CD8-positive, alpha-beta T cell (primary cell): ENCODE measurements at regions of chr10 and their contacts with region 1.

Region 1: DNA sequence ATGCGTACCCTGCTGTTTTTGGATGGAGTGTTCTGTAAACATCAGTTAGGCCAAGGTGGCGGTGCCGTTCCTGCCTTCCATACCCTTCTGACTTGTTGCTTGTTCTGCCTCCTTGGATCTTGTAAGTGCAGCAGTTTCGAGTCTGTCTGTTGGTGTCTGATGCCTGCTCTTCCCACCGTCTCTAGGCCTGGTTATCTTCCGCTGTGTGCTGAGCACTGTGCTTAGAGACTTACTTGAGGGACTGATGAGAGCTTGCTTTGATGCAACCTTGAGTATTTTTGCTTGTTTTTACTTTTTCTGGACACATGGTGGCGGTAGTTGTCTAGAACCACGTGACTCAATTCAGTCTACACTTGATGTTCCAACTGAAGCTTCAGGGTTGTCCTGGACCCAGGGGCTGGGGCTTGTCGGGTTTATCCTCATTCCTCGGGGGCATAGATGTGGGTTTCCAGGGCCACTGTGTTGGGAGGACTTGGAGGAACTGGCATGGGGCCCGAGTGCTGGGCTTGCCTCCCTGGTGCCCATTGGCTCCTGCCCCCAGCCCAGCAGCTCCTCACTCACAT is 14.4 kb upstream of the SPRN start:
- DNase-seq: peak in 2 of 9 experiments; percentile 43 to 46
- ATAC-seq: no peak
- H3K4me3 ChIP-seq: no peak overlapping the region
- H3K4me3 Mint-ChIP-seq: no peak overlapping the region
- H3K27ac ChIP-seq: no peak overlapping the region
- H3K27ac Mint-ChIP-seq: no peak overlapping the region
- H3K4me1 ChIP-seq: peaks cover 9% of the 10 kb centered on the region
- H3K4me1 Mint-ChIP-seq: peaks cover 26% of the 10 kb centered on the region
- H3K27me3 ChIP-seq: peaks cover 0 to 3% of the 10 kb centered on the region in 2 experiments
- H3K27me3 Mint-ChIP-seq: peaks cover 10% of the 10 kb centered on the region
- CTCF ChIP-seq: no peak

Region 2: GRCh38 chr10:133329491-133330202 is 109.1 kb before region 1 on chr10:
- CTCF ChIA-PET with region 1: interaction called, 11 read pairs
- POLR2A ChIA-PET with region 1: no interaction called
- intact Hi-C with region 1: loop called in 1 of 2 experiments (anchors 5 kb)
- DNase-seq: peak; percentile 75 to 94 (median 89)
- ATAC-seq: peak; percentile 81
- H3K4me3 ChIP-seq: peak overlapping the region; percentile 4 to 6
- H3K4me3 Mint-ChIP-seq: no peak overlapping the region
- H3K27ac ChIP-seq: no peak overlapping the region
- H3K27ac Mint-ChIP-seq: no peak overlapping the region
- H3K4me1 ChIP-seq: peaks cover 13% of the 10 kb centered on the region
- H3K4me1 Mint-ChIP-seq: peaks cover 9% of the 10 kb centered on the region
- H3K27me3 ChIP-seq: peaks cover 23 to 33% of the 10 kb centered on the region in 2 experiments
- H3K27me3 Mint-ChIP-seq: peaks cover 28% of the 10 kb centered on the region
- CTCF ChIP-seq: peak; percentile 96

Region 3: DNA sequence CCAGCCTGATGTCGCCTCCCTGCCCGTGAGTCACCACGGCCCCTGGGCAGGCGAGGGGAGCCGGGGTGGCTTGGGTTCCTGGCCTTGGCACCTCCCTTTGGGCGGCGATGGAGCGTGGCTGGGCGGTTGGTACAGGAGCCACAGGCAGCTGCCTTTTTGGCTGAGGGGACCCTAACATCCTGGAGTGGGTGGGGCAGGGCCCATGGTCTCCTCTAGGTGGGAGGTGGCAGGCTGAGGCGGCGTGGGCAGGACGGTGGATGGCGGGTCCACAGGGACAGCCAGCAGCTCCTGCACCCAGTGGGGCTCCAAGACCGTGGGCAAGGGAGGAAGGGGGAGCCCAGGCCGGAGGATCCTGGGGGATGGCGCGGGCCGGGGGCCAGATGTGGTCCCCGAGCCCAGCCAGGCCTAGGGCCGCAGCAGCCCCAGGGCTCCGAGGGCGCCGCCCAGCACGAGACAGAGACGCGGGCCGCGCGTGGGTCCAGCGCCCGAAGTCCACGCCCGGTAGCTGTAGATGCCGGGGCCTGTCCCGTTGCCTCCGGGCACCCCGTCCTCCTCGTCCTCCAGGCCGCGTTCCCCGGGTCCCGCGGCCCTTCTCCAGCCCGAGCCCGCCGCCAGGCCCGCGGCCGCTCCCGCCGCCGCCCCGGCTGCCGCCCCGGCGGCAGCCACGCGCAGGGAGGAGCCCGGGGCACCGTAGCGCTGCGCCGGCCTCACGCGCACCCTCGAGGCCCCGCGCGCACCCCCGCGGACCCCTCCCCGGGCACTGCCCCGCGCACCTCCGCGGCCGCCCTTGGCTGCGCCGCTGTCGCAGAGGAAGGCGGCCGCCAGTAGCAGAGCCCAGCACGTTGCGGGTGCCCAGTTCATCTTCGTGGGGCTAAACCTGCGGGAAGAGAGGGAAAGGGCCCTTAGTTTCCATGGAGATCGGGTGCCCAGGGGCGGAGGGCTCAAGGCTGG is 15.7 kb before region 1 on chr10:
- CTCF ChIA-PET with region 1: interaction called, 10 read pairs
- POLR2A ChIA-PET with region 1: no interaction called
- intact Hi-C with region 1: no loop called
- DNase-seq: no peak
- ATAC-seq: peak; percentile 56
- H3K4me3 ChIP-seq: no peak overlapping the region
- H3K4me3 Mint-ChIP-seq: peak overlapping the region; percentile 49
- H3K27ac ChIP-seq: no peak overlapping the region
- H3K27ac Mint-ChIP-seq: no peak overlapping the region
- H3K4me1 ChIP-seq: no peaks in the 10 kb centered on the region
- H3K4me1 Mint-ChIP-seq: no peaks in the 10 kb centered on the region
- H3K27me3 ChIP-seq: peaks cover 0 to 4% of the 10 kb centered on the region in 2 experiments
- H3K27me3 Mint-ChIP-seq: no peaks in the 10 kb centered on the region
- CTCF ChIP-seq: no peak

Region 4: GRCh38 chr10:133489816-133490588 is 51.2 kb after region 1 on chr10:
- CTCF ChIA-PET with region 1: interaction called, 3 read pairs
- POLR2A ChIA-PET with region 1: no interaction called
- intact Hi-C with region 1: loop called in 1 of 2 experiments (anchors 10 kb)
- DNase-seq: no peak
- ATAC-seq: no peak
- H3K4me3 ChIP-seq: no peak overlapping the region
- H3K4me3 Mint-ChIP-seq: no peak overlapping the region
- H3K27ac ChIP-seq: no peak overlapping the region
- H3K27ac Mint-ChIP-seq: no peak overlapping the region
- H3K4me1 ChIP-seq: no peaks in the 10 kb centered on the region
- H3K4me1 Mint-ChIP-seq: no peaks in the 10 kb centered on the region
- H3K27me3 ChIP-seq: no peaks in the 10 kb centered on the region
- H3K27me3 Mint-ChIP-seq: no peaks in the 10 kb centered on the region
- CTCF ChIP-seq: no peak

Region 5: DNA sequence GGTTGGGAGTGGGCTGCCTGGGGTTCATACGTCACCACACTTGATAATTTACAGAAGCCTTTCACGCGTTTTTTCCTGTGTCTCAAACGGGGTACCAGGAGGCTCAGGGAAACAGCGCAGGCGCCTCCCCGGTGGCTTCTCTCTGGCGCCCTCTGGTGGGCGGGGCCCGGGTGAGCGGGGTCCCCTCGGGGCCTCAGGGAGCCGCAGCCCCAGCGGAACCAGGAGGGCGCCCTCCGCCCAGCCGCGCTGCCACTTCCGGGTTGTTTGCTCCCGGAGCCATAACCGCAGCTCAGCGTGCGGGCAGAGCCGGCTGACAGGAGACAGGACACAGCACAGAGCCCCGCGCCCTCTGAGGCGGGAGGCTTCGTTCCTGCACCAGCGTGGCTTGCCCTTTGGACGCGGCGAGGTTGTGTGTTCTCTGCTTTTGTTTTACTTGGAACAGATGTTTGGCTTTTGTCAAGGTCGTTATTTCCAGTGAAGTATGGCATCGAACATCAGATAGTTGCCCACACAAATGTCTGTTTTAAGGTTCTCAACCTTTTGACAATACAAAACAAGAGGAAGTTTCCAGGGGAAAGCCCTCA is 81.5 kb after region 1 on chr10:
- CTCF ChIA-PET with region 1: interaction called, 3 read pairs
- POLR2A ChIA-PET with region 1: no interaction called
- intact Hi-C with region 1: loop called (anchors 2 to 5 kb)
- DNase-seq: peak; percentile 78 to 97 (median 89)
- ATAC-seq: peak; percentile 99
- H3K4me3 ChIP-seq: peak overlapping the region; percentile 47 to 61
- H3K4me3 Mint-ChIP-seq: peak overlapping the region; percentile 63
- H3K27ac ChIP-seq: no peak overlapping the region
- H3K27ac Mint-ChIP-seq: peak overlapping the region; percentile 45
- H3K4me1 ChIP-seq: peaks cover 6% of the 10 kb centered on the region
- H3K4me1 Mint-ChIP-seq: peaks cover 13% of the 10 kb centered on the region
- H3K27me3 ChIP-seq: no peaks in the 10 kb centered on the region
- H3K27me3 Mint-ChIP-seq: peaks cover 3% of the 10 kb centered on the region
- CTCF ChIP-seq: peak; percentile 88